H1 (cell line): ENCODE measurements at regions of chr10 and their contacts with region 1.

Region 1: GRCh38 chr10:51389415-51390321 is 309.7 kb downstream of the CSTF2T start:
- DNase-seq: peak; percentile 33 to 75
- H3K4me3 ChIP-seq: no peak overlapping the region
- H3K27ac ChIP-seq: no peak overlapping the region
- H3K4me1 ChIP-seq: no peaks in the 10 kb centered on the region
- H3K27me3 ChIP-seq: no peaks in the 10 kb centered on the region
- CTCF ChIP-seq: peak; percentile 85 to 91 (median 90)
- EP300 ChIP-seq: no peak
- POLR2A ChIP-seq: no peak
- RAD21 ChIP-seq: peak; percentile 92 to 94

Region 2: DNA sequence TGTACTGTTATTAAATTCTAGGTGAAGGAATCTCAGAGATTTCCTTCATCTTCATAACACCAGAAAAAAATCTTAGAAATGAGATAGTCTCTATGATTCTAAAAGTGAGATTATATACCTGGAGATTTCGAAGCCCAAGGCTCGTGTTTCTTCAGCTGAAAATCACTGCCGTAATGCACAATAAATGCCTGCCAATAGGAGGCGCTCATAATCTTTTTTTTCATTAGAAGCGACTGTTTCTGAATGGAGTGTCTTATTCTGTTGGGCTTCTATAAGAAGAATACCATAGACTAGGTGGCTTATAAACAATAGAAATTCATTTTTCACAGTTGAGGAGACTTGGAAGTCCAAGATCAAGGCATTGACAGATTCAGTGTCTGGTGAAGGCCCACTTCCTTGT is 20.7 kb before region 1 on chr10:
- CTCF ChIA-PET with region 1: interaction called, 19 read pairs
- POLR2A ChIA-PET with region 1: interaction called, 3 read pairs
- DNase-seq: no peak
- H3K4me3 ChIP-seq: no peak overlapping the region
- H3K27ac ChIP-seq: no peak overlapping the region
- H3K4me1 ChIP-seq: peaks cover 5 to 16% (median 13%) of the 10 kb centered on the region in 4 experiments; a peak in 6 of 7 replicates
- H3K27me3 ChIP-seq: no peaks in the 10 kb centered on the region; a peak in 1 of 7 replicates
- CTCF ChIP-seq: peak in 2 of 3 experiments; percentile 38 to 61; a peak in 2 of 4 replicates
- EP300 ChIP-seq: no peak
- POLR2A ChIP-seq: no peak
- RAD21 ChIP-seq: peak; percentile 38 to 54

Region 3: GRCh38 chr10:51377932-51378599 is 11.6 kb before region 1 on chr10:
- CTCF ChIA-PET with region 1: interaction called, 29 read pairs
- POLR2A ChIA-PET with region 1: no interaction called
- DNase-seq: no peak
- H3K4me3 ChIP-seq: no peak overlapping the region
- H3K27ac ChIP-seq: no peak overlapping the region
- H3K4me1 ChIP-seq: peaks cover 0 to 8% (median 1%) of the 10 kb centered on the region in 4 experiments; a peak in 2 of 7 replicates
- H3K27me3 ChIP-seq: no peaks in the 10 kb centered on the region
- CTCF ChIP-seq: no peak
- EP300 ChIP-seq: no peak
- POLR2A ChIP-seq: no peak
- RAD21 ChIP-seq: no peak

Region 4: GRCh38 chr10:51422311-51423120 is 32.8 kb after region 1 on chr10:
- CTCF ChIA-PET with region 1: interaction called, 24 read pairs
- POLR2A ChIA-PET with region 1: no interaction called
- DNase-seq: peak; percentile 7 to 67
- H3K4me3 ChIP-seq: no peak overlapping the region
- H3K27ac ChIP-seq: no peak overlapping the region
- H3K4me1 ChIP-seq: peaks cover 0 to 3% (median 1%) of the 10 kb centered on the region in 4 experiments; a peak in 3 of 7 replicates
- H3K27me3 ChIP-seq: no peaks in the 10 kb centered on the region
- CTCF ChIP-seq: peak; percentile 65 to 73 (median 73)
- EP300 ChIP-seq: no peak
- POLR2A ChIP-seq: no peak
- RAD21 ChIP-seq: peak; percentile 79 to 82